Activated T-helper 2 cell treated with anti-CD3 and anti-CD28 coated beads, Interferon-gamma antibody, Interleukin-2, Interleukin-4, amounts not matched to agents 10 μg/mL and 5 μg/mL and 100 μg/mL, durations not matched to agents 14 hours and 24 hours and 36 hours (primary cell): ENCODE measurements at regions of chr9 and their contacts with region 1.

Region 1: DNA sequence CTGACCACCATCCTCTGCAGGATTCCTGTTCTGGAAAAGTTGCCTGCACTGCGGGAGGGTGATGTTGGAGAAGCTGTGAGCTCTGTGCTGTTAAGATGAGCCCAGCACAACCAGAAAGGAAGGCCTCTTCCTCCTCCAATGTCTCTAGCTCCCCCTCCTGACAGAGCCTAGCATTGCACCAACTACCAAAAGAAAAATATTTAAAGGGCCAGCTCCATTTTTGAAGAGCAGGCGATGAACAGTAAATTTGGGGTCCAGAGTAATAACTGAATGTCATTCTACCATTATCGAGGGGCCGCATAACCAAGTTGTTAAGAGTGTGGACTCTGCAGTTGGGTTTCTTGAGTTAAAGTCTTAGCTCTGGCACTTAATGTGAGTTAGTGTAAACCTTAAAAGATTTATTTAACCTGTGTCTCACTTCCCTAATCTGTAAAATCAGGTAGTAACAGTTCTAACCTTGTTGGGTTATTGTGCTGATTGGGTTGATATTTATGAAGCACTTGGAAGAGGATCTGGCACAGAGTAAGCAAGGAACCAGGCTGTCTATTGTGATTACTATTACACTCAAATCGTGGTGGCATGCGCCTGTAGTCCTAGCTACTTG is 3.9 kb downstream of the TEX53 start:
- DNase-seq: peak; percentile 73
- H3K4me3 Mint-ChIP-seq: no peak overlapping the region
- H3K27ac Mint-ChIP-seq: no peak overlapping the region
- H3K4me1 Mint-ChIP-seq: peaks cover 21% of the 10 kb centered on the region
- H3K27me3 Mint-ChIP-seq: no peaks in the 10 kb centered on the region

Region 2: DNA sequence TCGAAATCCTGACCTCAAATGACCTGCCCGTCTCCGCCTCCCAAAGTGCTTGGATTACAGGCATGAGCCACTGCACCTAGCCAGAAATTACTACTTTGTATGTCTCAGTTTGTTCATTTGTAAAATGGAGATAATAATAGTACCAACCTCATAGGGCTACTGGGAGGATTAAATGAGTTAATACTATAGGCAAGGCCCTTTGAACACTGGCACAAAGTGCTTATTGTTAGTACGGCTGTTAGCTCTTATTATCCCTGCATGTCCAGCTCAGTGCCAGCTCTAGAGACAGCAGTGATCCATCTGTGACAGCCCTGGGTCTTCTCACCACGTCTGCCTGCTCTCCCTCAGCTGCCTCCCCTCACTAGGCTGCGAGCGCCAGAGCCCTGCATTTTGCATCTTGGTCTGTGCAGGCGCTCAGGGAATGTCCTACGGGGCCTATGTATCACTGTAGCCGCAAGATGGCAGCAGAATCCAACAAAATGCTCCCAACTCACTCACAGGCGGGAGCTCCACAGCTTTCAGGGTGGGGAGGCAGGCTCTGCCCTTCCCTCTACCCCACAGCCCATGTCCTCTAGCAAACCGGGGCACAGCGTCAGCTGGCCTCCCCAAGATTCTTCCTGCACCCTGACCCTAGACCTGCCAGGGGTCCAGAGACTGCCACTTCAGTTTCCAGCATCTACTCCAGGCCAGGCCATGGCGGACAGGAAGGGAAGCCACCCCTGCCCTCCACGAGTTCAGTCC is 248.2 kb before region 1 on chr9:
- intact Hi-C with region 1: loop called (anchors 1 kb)
- DNase-seq: peak; percentile 71
- H3K4me3 Mint-ChIP-seq: no peak overlapping the region
- H3K27ac Mint-ChIP-seq: no peak overlapping the region
- H3K4me1 Mint-ChIP-seq: peaks cover 6% of the 10 kb centered on the region
- H3K27me3 Mint-ChIP-seq: no peaks in the 10 kb centered on the region

Region 3: DNA sequence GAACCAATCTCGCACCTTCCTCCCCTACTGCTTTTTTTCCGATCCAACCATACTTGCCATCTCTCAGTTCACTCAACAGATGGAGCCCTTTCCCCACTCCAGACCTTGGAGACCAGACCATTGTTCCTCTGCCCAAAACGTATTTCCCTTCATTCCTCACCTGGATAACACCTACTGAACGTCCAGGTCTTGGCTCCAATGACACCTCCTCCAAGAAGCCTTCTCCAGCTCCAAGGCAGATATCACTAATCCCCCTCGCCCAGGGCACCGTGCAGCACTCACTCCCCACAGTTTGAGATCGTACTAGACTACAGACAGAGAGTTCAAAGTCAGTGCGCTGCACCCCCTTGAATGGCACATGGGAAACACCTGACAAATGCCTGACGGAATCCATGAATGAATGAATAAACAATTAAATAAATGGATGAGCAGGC is 218.8 kb before region 1 on chr9:
- intact Hi-C with region 1: loop called (anchors 1 kb)
- DNase-seq: no peak
- H3K4me3 Mint-ChIP-seq: no peak overlapping the region
- H3K27ac Mint-ChIP-seq: no peak overlapping the region
- H3K4me1 Mint-ChIP-seq: peaks cover 3% of the 10 kb centered on the region
- H3K27me3 Mint-ChIP-seq: peaks cover 6% of the 10 kb centered on the region

Region 4: GRCh38 chr9:114611516-114612271 is 42.0 kb before region 1 on chr9:
- intact Hi-C with region 1: loop called (anchors 2 kb)
- DNase-seq: peak; percentile 14
- H3K4me3 Mint-ChIP-seq: peak overlapping the region; percentile 83
- H3K27ac Mint-ChIP-seq: peak overlapping the region; percentile 86
- H3K4me1 Mint-ChIP-seq: peaks cover 44% of the 10 kb centered on the region
- H3K27me3 Mint-ChIP-seq: no peaks in the 10 kb centered on the region

Region 5: DNA sequence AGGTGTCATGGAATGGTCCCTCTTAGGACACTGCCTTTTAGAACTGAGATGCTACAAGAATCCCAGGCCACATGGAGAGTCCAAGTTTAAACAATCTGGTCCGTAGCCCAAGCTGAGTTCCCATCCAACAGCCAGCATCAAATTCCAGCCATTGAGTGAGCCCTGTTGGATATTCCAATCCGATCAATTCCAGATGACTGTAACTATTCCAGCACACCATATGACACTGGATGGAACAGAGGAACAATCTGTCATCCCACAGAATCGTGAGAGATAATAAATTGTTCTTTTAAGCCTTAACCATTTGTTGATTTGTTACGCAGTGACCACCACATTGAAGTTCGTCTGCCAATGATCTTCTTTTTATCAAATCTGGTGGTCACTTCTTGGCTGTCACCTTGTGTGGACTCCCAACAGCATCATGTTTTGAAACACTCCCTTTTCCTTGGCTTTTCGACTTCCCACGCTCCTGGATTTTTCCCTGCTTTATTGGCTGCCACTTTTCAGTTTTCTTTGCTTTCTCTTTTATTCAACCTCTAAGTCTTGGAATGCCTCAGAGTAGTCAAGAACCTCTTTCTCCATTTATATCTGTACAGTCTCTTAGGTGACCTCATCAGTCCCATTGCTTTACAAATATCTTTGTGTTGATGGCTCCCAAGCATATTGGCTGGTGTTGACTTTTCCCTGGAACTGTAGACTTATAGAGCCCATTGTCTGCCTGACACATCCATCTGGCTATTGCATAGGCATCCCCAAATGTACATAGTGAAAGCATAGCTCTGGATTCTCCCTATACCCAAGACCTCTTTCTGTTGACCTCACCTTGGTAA is 106.1 kb after region 1 on chr9:
- intact Hi-C with region 1: no loop called
- DNase-seq: no peak
- H3K4me3 Mint-ChIP-seq: no peak overlapping the region
- H3K27ac Mint-ChIP-seq: no peak overlapping the region
- H3K4me1 Mint-ChIP-seq: no peaks in the 10 kb centered on the region
- H3K27me3 Mint-ChIP-seq: peaks cover 15% of the 10 kb centered on the region